Tibial artery (tissue), 4 donors: ENCODE measurements at regions of chr6 and their contacts with region 1.

Region 1: GRCh38 chr6:148464319-148465010 is 121.8 kb downstream of the SASH1 start:
- DNase-seq: peak; percentile 80 to 81
- H3K4me3 ChIP-seq: no peak overlapping the region
- H3K27ac ChIP-seq: peak overlapping the region in 1 of 2 donors; percentile 61
- H3K4me1 ChIP-seq: peaks cover 0 to 49% (median 21%) of the 10 kb centered on the region in 4 donors
- H3K27me3 ChIP-seq: no peaks in the 10 kb centered on the region
- CTCF ChIP-seq: peak; percentile 87 to 89

Region 2: DNA sequence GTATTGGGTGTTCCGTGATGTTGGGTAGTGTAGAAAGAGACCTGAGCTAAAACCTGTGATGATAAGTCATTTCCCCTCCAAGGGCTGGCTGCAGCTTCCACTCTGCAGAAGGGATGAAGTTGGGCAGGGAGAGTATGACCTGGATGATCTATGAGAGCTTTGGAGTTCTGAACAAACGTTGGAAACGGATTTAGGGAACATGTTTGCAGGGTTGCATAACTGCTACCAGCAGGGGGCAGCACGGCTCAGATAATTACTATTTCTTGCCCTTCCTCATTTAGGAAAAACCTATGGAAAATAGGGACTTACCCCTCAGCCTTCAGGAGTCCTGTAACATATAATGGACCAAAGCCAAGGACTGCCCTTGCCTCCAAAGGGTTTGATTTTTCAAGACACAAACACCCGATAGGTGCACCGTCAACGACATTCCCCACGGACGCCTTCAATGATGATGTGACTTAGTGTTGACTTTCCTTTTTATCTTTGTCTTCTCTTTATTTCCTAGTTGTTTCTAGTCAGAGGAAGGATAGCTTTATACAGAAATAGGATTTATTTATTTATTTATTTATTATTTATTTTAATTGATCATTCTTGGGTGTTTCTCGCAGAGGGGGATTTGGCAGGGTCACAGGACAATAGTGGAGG is 286.8 kb before region 1 on chr6:
- intact Hi-C with region 1: loop called (anchors 5 kb)
- DNase-seq: peak; percentile 76
- H3K4me3 ChIP-seq: no peak overlapping the region
- H3K27ac ChIP-seq: no peak overlapping the region
- H3K4me1 ChIP-seq: no peaks in the 10 kb centered on the region
- H3K27me3 ChIP-seq: no peaks in the 10 kb centered on the region
- CTCF ChIP-seq: peak; percentile 78 to 90

Region 3: GRCh38 chr6:148342357-148343046 is 122.0 kb before region 1 on chr6 and contains the start of gene SASH1:
- intact Hi-C with region 1: loop called (anchors 10 kb)
- DNase-seq: peak; percentile 70 to 87
- H3K4me3 ChIP-seq: peak within 1 kb of the TSS; percentile 84 to 90
- H3K27ac ChIP-seq: peak within 1 kb of the TSS; percentile 89 to 91
- H3K4me1 ChIP-seq: peaks cover 0 to 50% (median 26%) of the 10 kb centered on the region in 4 donors
- H3K27me3 ChIP-seq: no peaks in the 10 kb centered on the region
- CTCF ChIP-seq: no peak

Region 4: DNA sequence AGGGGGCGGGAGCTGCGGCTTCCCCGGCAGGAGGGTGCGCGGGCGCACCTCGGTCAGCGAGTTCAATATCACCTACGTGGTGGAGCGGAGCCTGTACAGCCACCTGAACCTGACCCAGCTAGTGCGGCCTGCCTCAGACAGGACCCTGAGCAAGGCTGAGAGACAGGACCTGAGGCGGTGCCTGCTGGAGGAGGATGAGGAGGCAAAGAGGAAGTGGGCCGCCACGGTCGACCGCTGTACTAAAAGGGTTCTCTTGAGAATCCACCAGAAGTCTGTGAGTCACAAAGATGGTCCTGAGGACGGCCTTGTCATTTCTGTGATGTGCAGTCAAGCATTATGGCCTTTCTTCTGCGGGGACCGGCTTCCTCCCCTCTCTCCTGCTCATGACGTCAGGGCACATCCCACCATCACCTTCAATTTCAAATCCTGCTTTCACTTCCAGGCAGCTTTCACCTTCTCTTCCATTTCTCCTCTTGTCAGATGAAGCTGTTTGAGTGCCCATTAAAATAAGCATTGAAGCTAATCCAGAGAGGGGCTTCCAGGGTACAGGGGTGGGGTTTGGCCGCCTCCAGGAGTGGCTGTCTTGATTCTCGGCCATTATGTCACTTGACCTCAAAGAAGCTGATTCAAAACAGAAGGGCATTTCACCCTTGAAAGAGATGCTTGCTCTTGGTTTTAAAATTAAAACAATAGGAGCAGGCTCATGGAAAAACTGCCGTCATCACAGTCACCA is 55.8 kb after region 1 on chr6:
- intact Hi-C with region 1: loop called (anchors 10 kb)
- DNase-seq: no peak
- H3K4me3 ChIP-seq: no peak overlapping the region
- H3K27ac ChIP-seq: peak overlapping the region; percentile 65 to 71
- H3K4me1 ChIP-seq: peaks cover 0 to 59% (median 9%) of the 10 kb centered on the region in 4 donors
- H3K27me3 ChIP-seq: no peaks in the 10 kb centered on the region
- CTCF ChIP-seq: no peak